ENCODE measurements at regions of chr7 and their contacts with region 1.

Region 1: GRCh38 chr7:55438757-55439525 is 73.8 kb downstream of the LANCL2 start:
- DNase-seq: no peak
- H3K4me3 Mint-ChIP-seq: no peak overlapping the region
- H3K27ac Mint-ChIP-seq: peak overlapping the region; percentile 28
- H3K4me1 Mint-ChIP-seq: peaks cover 45% of the 10 kb centered on the region
- H3K27me3 Mint-ChIP-seq: no peaks in the 10 kb centered on the region

Region 2: GRCh38 chr7:55335151-55335550 is 103.8 kb before region 1 on chr7:
- CTCF ChIA-PET with region 1: no interaction called
- POLR2A ChIA-PET with region 1: interaction called, 10 read pairs
- DNase-seq: no peak
- H3K4me3 Mint-ChIP-seq: no peak overlapping the region
- H3K27ac Mint-ChIP-seq: no peak overlapping the region
- H3K4me1 Mint-ChIP-seq: no peaks in the 10 kb centered on the region
- H3K27me3 Mint-ChIP-seq: peaks cover 16% of the 10 kb centered on the region

Region 3: DNA sequence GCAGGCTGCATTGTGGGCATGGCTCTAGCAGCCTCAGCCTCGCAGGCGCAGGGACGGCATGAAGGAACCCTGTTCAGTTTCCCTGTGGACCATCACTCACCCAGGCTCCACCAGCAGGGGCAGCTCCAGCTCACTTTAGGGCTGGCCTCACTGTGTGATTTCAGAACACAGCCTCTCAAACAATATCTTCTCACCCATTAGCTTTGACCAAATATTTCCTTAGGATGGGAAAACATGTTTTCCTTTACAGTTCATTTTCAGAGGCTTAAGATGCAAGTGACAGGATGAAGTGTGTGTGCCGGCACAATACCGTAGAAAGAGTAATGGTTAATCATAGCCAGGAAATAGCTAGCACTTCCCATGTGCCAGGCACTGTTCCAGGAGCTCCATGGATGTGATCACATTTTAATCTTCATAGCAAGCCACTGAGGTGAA is 15.6 kb before region 1 on chr7:
- CTCF ChIA-PET with region 1: no interaction called
- POLR2A ChIA-PET with region 1: no interaction called
- DNase-seq: no peak
- H3K4me3 Mint-ChIP-seq: no peak overlapping the region
- H3K27ac Mint-ChIP-seq: no peak overlapping the region
- H3K4me1 Mint-ChIP-seq: peaks cover 3% of the 10 kb centered on the region
- H3K27me3 Mint-ChIP-seq: no peaks in the 10 kb centered on the region

Measured in activated CD4-positive, alpha-beta T cell treated with anti-CD3 and anti-CD28 coated beads, Interleukin-2, amount 10 ng/mL, durations not matched to agents 7 days and 5 days (primary cell).